ENCODE measurements at regions of chr14 and their contacts with region 1.

Region 1: DNA sequence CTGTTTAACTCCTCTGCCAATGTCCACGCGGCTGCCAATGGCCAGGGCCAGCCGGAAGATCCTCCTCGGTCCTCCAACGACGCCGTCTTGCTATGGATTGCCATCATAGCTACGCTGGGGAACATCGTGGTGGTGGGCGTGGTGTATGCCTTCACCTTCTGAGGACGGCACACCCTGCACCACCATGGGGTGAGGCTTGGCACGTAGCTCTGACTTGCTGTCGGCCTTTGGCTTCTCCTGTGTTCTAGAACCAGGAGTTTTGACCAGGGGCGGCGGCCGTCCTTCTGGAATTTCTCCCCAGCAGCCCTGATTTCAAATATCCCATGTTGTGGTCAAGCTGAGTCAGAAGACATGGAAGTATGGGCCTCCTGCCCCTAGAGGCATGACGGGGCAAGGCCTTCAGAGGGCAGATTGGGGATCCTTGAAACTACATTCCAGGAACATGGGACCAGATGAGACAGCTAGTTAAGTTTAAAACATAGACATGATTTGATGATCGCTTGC is 47.5 kb downstream of the C14orf132 start:
- DNase-seq: no peak
- H3K4me3 ChIP-seq: no peak overlapping the region
- H3K27ac ChIP-seq: no peak overlapping the region
- H3K4me1 ChIP-seq: no peaks in the 10 kb centered on the region
- H3K27me3 ChIP-seq: peaks cover 0 to 9% (median 2%) of the 10 kb centered on the region in 5 experiments

Region 2: DNA sequence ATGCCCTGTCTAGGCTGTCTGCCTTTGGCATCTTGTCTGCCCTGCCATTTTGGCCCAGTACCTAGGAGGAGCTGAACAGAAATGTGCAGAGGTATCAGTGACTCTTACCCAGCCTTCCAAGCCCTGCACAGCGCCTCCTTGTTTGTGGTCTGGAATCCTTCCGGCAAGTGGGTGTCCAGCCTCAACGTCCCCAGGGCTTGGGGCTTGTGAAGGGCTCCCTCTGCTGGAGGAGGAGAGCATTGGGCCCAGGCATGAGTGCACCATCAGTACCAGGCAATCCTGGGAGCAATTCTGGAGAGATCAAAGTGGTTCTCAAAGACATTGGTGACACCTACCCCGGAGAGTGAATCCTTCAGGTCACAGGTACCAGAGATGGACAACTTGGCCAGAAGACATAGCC is 402.8 kb before region 1 on chr14:
- CTCF ChIA-PET with region 1: no interaction called
- POLR2A ChIA-PET with region 1: no interaction called
- DNase-seq: peak in 2 of 3 donors; percentile 22 to 26
- H3K4me3 ChIP-seq: no peak overlapping the region
- H3K27ac ChIP-seq: no peak overlapping the region
- H3K4me1 ChIP-seq: no peaks in the 10 kb centered on the region
- H3K27me3 ChIP-seq: peaks cover 0 to 10% (median 4%) of the 10 kb centered on the region in 5 experiments

Region 3: DNA sequence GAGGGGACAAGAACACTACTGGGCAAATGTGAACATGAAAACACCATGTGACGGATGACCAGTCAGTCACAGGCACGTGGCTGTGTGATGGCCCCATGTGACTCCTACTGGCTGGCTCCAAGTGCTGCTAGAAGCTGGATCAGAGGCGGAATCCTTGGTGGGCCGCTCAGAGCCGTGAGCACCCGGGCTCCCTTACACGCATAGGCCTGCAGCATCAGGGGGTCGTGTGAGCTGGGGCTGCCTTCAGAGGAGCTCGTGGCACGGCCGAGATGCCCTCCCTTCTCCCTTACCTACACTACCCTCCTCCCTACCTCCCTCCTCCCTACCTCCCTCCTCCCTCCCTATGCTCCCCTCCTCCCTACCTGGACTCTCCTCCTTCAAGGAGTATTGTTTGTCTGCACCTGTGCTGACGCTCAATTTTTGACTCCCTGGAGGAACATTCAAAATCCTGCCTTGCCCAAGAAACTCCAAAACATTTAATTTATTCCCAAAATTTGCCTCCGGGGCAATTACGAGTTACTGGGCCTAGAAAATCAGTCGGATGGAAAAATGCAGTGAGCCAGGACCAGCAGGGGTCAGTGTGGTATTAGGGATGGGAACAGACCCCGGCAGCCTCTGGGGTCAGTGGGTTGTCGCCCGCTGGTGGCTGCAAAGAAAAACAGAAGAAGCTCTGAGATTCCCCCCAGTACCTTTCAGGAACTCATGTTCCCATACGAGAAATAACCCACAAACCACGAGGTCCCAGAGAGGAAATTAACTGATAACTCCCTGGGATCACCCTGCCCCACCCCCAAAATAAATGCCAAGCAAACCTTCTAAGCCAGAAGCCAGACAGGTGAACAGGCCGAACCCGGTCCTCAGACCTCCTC is 13.8 kb after region 1 on chr14:
- CTCF ChIA-PET with region 1: interaction called, 12 read pairs
- POLR2A ChIA-PET with region 1: no interaction called
- DNase-seq: peak; percentile 74 to 86 (median 79)
- H3K4me3 ChIP-seq: no peak overlapping the region
- H3K27ac ChIP-seq: no peak overlapping the region
- H3K4me1 ChIP-seq: no peaks in the 10 kb centered on the region
- H3K27me3 ChIP-seq: peaks cover 0 to 4% (median 0%) of the 10 kb centered on the region in 5 experiments

Measured in common myeloid progenitor, CD34-positive (primary cell).